ENCODE measurements at regions of chr12 and their contacts with region 1.

Region 1: GRCh38 chr12:949453-950191 is at the start of gene RAD52:
- DNase-seq: peak; percentile 98
- H3K4me3 Mint-ChIP-seq: peak within 1 kb of the TSS; percentile 96
- H3K27ac Mint-ChIP-seq: peak within 1 kb of the TSS; percentile 86
- H3K4me1 Mint-ChIP-seq: peaks cover 26% of the 10 kb centered on the region
- H3K27me3 Mint-ChIP-seq: no peaks in the 10 kb centered on the region
- CTCF ChIP-seq: peak; percentile 92
- total RNA-seq, gene RAD52: 26.0 and 27.9 TPM in 2 replicates

Region 2: GRCh38 chr12:768434-768833 is 181.2 kb before region 1 on chr12:
- CTCF ChIA-PET with region 1: no interaction called
- POLR2A ChIA-PET with region 1: no interaction called
- intact Hi-C with region 1: no loop called
- DNase-seq: no peak
- H3K4me3 Mint-ChIP-seq: no peak overlapping the region
- H3K27ac Mint-ChIP-seq: no peak overlapping the region
- H3K4me1 Mint-ChIP-seq: no peaks in the 10 kb centered on the region
- H3K27me3 Mint-ChIP-seq: no peaks in the 10 kb centered on the region
- CTCF ChIP-seq: no peak

Region 3: GRCh38 chr12:857611-858010 is 92.0 kb before region 1 on chr12:
- CTCF ChIA-PET with region 1: no interaction called
- POLR2A ChIA-PET with region 1: interaction called, 10 read pairs
- intact Hi-C with region 1: no loop called
- DNase-seq: peak; percentile 88
- H3K4me3 Mint-ChIP-seq: peak overlapping the region; percentile 47
- H3K27ac Mint-ChIP-seq: peak overlapping the region; percentile 92
- H3K4me1 Mint-ChIP-seq: peaks cover 24% of the 10 kb centered on the region
- H3K27me3 Mint-ChIP-seq: no peaks in the 10 kb centered on the region
- CTCF ChIP-seq: no peak

Region 4: GRCh38 chr12:990661-991349 is 41.2 kb after region 1 on chr12 and contains the start of gene ERC1:
- CTCF ChIA-PET with region 1: interaction called, 11 read pairs
- POLR2A ChIA-PET with region 1: interaction called, 59 read pairs
- intact Hi-C with region 1: loop called (anchors 2 kb)
- DNase-seq: peak; percentile 87
- H3K4me3 Mint-ChIP-seq: peak within 1 kb of the TSS; percentile 99
- H3K27ac Mint-ChIP-seq: peak within 1 kb of the TSS; percentile 56
- H3K4me1 Mint-ChIP-seq: peaks cover 40% of the 10 kb centered on the region
- H3K27me3 Mint-ChIP-seq: no peaks in the 10 kb centered on the region
- CTCF ChIP-seq: no peak
- total RNA-seq, gene ERC1: 55.1 and 86.8 TPM in 2 replicates

Region 5: GRCh38 chr12:1013618-1014489 is 64.2 kb after region 1 on chr12:
- CTCF ChIA-PET with region 1: interaction called, 4 read pairs
- POLR2A ChIA-PET with region 1: interaction called, 20 read pairs
- intact Hi-C with region 1: no loop called
- DNase-seq: peak; percentile 91
- H3K4me3 Mint-ChIP-seq: peak overlapping the region; percentile 47
- H3K27ac Mint-ChIP-seq: peak overlapping the region; percentile 96
- H3K4me1 Mint-ChIP-seq: peaks cover 11% of the 10 kb centered on the region
- H3K27me3 Mint-ChIP-seq: no peaks in the 10 kb centered on the region
- CTCF ChIP-seq: no peak

Region 6: GRCh38 chr12:1093166-1093751 is 143.6 kb after region 1 on chr12:
- CTCF ChIA-PET with region 1: interaction called, 10 read pairs
- POLR2A ChIA-PET with region 1: interaction called, 11 read pairs
- intact Hi-C with region 1: loop called (anchors 5 kb)
- DNase-seq: peak; percentile 75
- H3K4me3 Mint-ChIP-seq: no peak overlapping the region
- H3K27ac Mint-ChIP-seq: no peak overlapping the region
- H3K4me1 Mint-ChIP-seq: peaks cover 10% of the 10 kb centered on the region
- H3K27me3 Mint-ChIP-seq: no peaks in the 10 kb centered on the region
- CTCF ChIP-seq: peak; percentile 75

Region 7: GRCh38 chr12:1103632-1104031 is 154.0 kb after region 1 on chr12:
- CTCF ChIA-PET with region 1: no interaction called
- POLR2A ChIA-PET with region 1: no interaction called
- intact Hi-C with region 1: no loop called
- DNase-seq: peak; percentile 5
- H3K4me3 Mint-ChIP-seq: no peak overlapping the region
- H3K27ac Mint-ChIP-seq: no peak overlapping the region
- H3K4me1 Mint-ChIP-seq: peaks cover 39% of the 10 kb centered on the region
- H3K27me3 Mint-ChIP-seq: no peaks in the 10 kb centered on the region
- CTCF ChIP-seq: no peak

Region 8: DNA sequence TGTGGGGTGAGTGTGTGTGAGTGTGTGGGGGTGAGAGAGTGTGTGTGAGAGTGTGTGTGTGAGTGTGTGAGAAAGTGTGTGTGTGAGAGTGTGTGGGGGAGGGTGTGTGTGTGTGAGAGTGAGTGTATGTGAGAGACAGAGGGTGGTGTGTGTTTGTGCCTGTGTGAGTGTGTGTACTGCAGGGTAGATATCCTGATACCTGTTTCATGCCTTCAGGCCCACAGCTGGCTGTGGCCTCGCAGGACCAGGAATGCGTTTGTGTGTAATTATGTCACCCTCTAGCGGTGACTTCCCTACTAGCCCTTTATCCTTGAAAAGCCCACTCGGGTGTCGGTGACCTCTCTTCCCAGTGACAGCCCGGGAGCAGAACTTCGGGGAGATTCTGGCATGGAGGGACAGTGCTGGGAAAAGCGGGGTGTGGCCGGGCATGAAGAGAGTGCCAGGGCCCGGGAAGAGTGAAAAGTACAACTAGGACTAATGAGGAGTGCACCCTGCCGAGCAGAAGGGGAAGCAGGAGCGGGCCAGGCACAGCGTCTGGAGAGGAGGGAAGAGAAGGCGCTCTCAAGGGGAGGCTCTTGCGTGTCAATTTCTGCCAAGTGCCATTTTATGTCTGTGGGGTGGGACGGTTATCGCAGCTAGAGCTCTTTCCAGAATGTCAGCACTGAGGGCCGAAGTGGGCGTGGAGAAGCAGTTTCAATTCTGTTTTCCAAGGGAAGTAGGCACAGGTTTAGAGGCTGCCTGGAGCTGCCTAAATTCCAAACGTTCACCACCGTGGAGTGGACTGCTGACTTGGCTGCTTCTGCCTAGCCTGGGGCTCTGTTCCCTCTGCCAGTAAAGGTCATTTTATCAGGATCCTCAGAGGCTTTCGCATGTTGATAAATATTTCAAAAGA is 655.8 kb after region 1 on chr12:
- CTCF ChIA-PET with region 1: no interaction called
- POLR2A ChIA-PET with region 1: no interaction called
- intact Hi-C with region 1: loop called (anchors 5 kb)
- DNase-seq: peak; percentile 83
- H3K4me3 Mint-ChIP-seq: peak overlapping the region; percentile 77
- H3K27ac Mint-ChIP-seq: peak overlapping the region; percentile 86
- H3K4me1 Mint-ChIP-seq: peaks cover 26% of the 10 kb centered on the region
- H3K27me3 Mint-ChIP-seq: no peaks in the 10 kb centered on the region
- CTCF ChIP-seq: peak; percentile 78